Stomach (tissue), 19 donors: ENCODE measurements at regions of chr3 and their contacts with region 1.

Region 1: DNA sequence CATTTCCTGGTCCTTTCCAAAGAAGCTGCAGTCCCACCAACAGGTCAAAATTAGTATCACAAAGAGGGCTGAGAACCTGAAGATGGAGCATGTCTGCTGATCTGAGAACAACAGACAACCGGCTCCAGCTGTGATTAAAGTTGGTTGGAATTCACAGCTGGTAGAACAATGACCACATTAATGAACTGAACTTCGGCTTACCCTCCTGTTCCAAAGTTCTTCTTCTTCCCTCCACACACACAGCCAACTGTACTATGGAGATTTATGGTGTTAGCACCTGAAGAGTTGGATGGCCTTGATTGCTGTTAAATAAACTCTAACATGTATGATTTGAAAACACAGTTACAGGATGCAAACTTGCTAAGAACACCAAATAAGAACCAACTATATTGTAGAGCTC is 27.4 kb upstream of the ROPN1 start:
- DNase-seq: no peak
- H3K4me3 ChIP-seq: no peak overlapping the region
- H3K27ac ChIP-seq: no peak overlapping the region
- H3K4me1 ChIP-seq: peaks cover 0 to 17% (median 9%) of the 10 kb centered on the region in 4 donors
- H3K27me3 ChIP-seq: peaks cover 0 to 29% (median 0%) of the 10 kb centered on the region in 3 donors
- CTCF ChIP-seq: no peak
- EP300 ChIP-seq: no peak
- POLR2A ChIP-seq: no peak

Region 2: GRCh38 chr3:124078953-124079911 is 59.9 kb after region 1 on chr3:
- intact Hi-C with region 1: loop called (anchors 5 kb)
- DNase-seq: peak in 1 of 2 donors; percentile 63
- H3K4me3 ChIP-seq: no peak overlapping the region
- H3K27ac ChIP-seq: no peak overlapping the region
- H3K4me1 ChIP-seq: peaks cover 0 to 12% (median 5%) of the 10 kb centered on the region in 4 donors
- H3K27me3 ChIP-seq: no peaks in the 10 kb centered on the region
- CTCF ChIP-seq: peak in 5 of 7 experiments; percentile 32 to 80 (median 56)
- EP300 ChIP-seq: no peak
- POLR2A ChIP-seq: no peak

Region 3: GRCh38 chr3:124281453-124282316 is 262.4 kb after region 1 on chr3:
- intact Hi-C with region 1: loop called (anchors 5 kb)
- DNase-seq: peak in 1 of 2 donors; percentile 58
- H3K4me3 ChIP-seq: no peak overlapping the region
- H3K27ac ChIP-seq: peak overlapping the region in 4 of 5 donors; percentile 33 to 84 (median 68)
- H3K4me1 ChIP-seq: peaks cover 4 to 58% (median 14%) of the 10 kb centered on the region in 4 donors
- H3K27me3 ChIP-seq: no peaks in the 10 kb centered on the region
- CTCF ChIP-seq: peak in 5 of 7 experiments; percentile 23 to 44 (median 32)
- EP300 ChIP-seq: no peak
- POLR2A ChIP-seq: no peak